Left ventricle myocardium inferior (tissue), 1 donor: ENCODE measurements at regions of chr17 and their contacts with region 1.

Region 1: DNA sequence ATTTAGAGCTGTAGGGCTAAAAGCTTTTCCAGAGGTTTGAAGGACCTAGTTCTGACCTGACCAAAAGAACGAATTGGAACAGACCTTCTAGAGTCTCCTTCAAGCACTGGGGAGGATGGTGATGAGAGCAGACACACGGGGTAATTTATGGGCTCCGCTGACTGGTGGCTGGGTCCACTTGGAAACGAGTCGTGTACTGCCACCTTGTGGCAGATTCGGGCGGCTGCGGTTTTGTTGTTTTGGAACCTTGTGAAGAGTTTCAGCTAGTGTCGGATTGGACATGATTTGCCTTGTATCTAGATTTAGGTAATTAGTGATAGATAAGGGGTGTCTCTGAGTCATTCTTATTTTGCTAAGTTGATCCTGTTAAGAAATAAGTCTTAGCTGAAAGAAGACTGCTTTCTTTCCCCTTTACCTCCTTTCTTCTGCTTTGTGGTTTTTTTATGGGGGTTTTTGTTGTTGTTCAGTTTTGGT is 98.9 kb downstream of the AATF start:
- DNase-seq: peak; percentile 70
- H3K4me3 ChIP-seq: no peak overlapping the region
- H3K27ac ChIP-seq: no peak overlapping the region
- H3K4me1 ChIP-seq: no peaks in the 10 kb centered on the region
- H3K27me3 ChIP-seq: no peaks in the 10 kb centered on the region
- CTCF ChIP-seq: peak; percentile 87

Region 2: DNA sequence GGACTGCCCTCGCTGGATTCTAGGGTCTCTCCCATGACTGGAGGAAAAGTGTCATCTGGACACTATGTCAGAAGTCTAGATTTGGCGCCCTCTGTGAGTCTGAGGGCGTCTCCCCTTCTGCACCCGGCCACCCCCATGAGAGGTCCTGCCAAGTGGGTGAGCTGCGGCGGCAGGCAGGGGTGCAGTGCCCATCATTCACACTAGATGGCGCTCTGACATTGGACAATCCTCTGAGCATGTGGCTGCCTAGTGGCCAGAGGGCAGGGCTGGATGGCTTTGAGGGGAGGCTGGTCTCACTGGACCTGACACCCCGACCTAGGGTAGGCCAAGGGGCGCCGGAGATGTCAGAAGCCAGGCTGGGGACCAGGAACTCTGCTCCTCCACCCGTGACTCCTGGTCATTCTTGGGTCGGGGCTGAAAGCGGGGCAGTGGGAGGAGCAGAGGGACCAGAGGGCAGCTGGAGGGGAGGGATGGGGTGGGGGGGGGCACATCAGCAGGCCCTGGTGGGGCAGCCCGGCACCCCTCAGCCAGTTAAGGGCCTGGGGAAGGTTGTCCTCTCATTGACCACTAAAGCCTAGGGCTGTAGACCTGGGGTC is 418.3 kb before region 1 on chr17:
- intact Hi-C with region 1: loop called (anchors 10 kb)
- DNase-seq: peak; percentile 66
- H3K4me3 ChIP-seq: no peak overlapping the region
- H3K27ac ChIP-seq: no peak overlapping the region
- H3K4me1 ChIP-seq: peaks cover 17% of the 10 kb centered on the region
- H3K27me3 ChIP-seq: peaks cover 39% of the 10 kb centered on the region
- CTCF ChIP-seq: peak; percentile 100